Breast epithelium (tissue), 4 donors: ENCODE measurements at regions of chr19 and their contacts with region 1.

Region 1: DNA sequence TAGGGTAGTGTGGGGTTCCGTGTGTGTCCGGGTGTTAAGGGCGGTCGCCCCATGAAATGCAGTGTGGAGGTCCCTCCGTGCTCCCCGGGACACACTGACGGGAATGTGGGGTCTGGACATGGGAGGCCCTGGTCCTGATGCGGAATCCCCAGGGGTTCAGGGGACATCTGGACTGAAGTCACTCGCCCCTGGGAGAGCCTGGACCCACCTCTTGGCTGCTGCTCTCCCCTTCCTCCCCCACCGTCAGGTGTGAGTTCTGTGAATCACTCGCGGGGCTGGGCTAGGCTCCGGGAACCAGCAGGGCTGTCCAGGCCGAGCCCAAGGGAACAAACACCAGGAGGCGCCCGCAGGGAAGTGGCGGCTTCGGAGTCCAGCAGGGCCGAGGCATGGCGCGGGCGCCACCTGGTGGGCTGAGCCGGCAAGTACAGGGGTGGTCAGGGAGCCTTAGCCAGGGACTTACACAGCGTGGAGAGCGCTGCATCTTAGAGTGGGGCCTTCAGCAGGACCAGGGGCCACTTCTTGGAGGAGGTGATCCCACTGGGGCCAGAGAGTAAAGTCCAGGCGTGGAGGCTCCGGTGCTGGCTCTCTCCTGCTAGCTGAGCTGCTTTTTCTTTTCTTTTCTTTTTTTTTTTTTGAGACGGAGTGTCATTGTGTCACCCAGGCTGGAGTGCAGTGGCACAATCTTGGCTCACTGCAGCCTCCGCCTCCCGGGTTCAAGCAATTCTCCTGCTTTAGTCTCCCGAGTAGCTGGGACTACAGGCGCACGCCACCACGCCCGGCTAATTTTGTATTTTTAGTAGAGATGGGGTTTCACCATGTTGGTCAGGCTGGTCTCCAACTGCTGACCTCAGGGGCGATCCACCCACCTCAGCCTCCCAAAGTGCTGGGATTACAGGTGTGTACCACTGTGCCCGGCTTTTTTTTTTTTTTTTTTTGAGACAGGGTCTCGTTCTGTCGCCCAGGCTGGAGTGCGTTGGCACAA is 20.1 kb downstream of the WTIP start:
- DNase-seq: peak; percentile 79 to 93
- H3K4me3 ChIP-seq: peak overlapping the region in 1 of 3 donors; percentile 26
- H3K27ac ChIP-seq: peak overlapping the region in 1 of 2 donors; percentile 65
- H3K4me1 ChIP-seq: no peaks in the 10 kb centered on the region
- H3K27me3 ChIP-seq: no peaks in the 10 kb centered on the region
- CTCF ChIP-seq: peak; percentile 92 to 97 (median 95)
- POLR2A ChIP-seq: no peak

Region 2: DNA sequence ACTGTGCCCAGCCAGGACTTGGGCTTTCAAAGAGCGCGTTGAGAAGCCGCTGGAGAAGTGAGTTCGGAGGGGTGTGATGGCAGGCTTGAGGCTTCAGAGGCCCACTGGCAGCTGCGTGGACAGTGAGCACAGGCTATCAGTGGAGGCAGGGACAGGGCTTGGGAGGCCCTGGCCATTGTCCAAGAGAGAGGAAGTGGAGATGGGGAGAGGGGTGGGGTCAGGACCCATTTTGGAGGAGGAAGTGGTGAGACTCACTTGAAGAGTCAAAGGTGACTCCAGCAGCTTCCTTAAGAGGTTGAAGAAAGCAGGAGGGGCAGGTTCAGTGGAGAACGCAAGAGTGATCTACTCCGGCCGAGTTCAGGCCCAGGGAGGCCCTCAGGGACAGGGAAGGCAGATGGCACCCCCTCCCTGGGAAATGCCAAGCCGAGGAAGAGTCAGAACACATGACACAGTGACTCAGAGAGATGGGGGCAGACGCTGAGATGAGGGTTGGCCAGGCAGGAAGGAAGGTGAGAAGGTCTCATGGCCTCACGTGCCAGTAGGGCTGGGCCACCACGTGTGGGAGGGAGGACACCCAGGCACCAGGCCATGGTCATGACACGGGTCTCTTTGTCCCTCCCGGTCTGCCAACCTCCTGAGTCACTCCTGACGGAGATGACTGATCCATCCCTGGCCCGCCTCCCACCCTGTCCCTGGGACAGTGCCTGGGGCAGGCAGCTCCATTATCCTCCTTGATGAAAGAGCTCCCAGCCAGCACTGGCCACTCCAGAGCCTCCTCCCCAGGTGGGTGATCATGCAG is 817.2 kb after region 1 on chr19:
- intact Hi-C with region 1: loop called (anchors 5 kb)
- DNase-seq: peak; percentile 83 to 85
- H3K4me3 ChIP-seq: no peak overlapping the region
- H3K27ac ChIP-seq: peak overlapping the region; percentile 61 to 83
- H3K4me1 ChIP-seq: no peaks in the 10 kb centered on the region
- H3K27me3 ChIP-seq: no peaks in the 10 kb centered on the region
- CTCF ChIP-seq: no peak
- POLR2A ChIP-seq: no peak